ENCODE measurements at regions of chr4 and their contacts with region 1.

Region 1: DNA sequence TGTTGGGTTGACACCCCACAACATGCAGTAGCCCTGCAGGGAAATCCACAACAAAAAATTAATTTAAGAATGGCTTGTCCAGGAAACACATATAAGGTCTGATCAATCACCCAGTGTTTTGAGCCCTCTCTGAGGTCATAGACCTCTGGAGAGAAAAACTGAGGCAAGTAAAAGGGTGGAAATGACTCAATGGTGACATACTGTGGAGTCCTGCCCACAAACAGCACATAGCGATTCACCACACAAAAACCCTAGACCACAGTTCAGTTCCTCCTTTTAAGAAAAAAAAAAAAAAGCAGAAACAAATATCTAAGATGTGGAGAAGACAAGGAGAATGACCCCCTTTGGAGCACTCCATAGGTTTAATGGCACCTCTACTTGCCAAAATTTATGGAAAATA is 2691.0 kb downstream of the PCDH7 start:
- DNase-seq: no peak
- ATAC-seq: no peak
- H3K4me3 ChIP-seq: no peak overlapping the region
- H3K4me3 Mint-ChIP-seq: no peak overlapping the region
- H3K27ac ChIP-seq: no peak overlapping the region
- H3K27ac Mint-ChIP-seq: no peak overlapping the region
- H3K4me1 ChIP-seq: no peaks in the 10 kb centered on the region
- H3K4me1 Mint-ChIP-seq: no peaks in the 10 kb centered on the region
- H3K27me3 ChIP-seq: no peaks in the 10 kb centered on the region
- H3K27me3 Mint-ChIP-seq: no peaks in the 10 kb centered on the region

Region 2: DNA sequence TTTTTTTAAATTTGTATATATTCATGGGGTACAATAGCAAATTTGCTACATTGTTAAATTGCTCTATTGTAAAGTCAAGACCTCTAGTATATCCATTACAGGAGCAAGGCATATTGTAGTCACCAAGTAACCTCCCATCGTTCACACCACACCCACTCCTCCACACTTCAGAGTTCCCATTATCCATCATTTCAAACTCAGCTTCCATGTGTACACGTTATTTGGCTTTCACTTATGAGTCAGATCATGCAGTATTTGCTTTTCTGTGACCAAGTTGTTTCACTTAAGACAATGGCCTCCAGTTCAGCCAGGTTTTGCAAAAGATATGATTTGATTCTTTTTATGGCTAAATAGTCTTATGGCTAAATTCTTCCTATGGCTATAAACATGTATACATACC is 76.8 kb before region 1 on chr4:
- CTCF ChIA-PET with region 1: interaction called, 10 read pairs
- POLR2A ChIA-PET with region 1: no interaction called
- intact Hi-C with region 1: no loop called
- DNase-seq: no peak
- ATAC-seq: no peak
- H3K4me3 ChIP-seq: no peak overlapping the region
- H3K4me3 Mint-ChIP-seq: no peak overlapping the region
- H3K27ac ChIP-seq: no peak overlapping the region
- H3K27ac Mint-ChIP-seq: no peak overlapping the region
- H3K4me1 ChIP-seq: no peaks in the 10 kb centered on the region
- H3K4me1 Mint-ChIP-seq: no peaks in the 10 kb centered on the region
- H3K27me3 ChIP-seq: no peaks in the 10 kb centered on the region
- H3K27me3 Mint-ChIP-seq: no peaks in the 10 kb centered on the region

Measured in naive thymus-derived CD4-positive, alpha-beta T cell (primary cell).